HCT116 (cell line): ENCODE measurements at regions of chr12 and their contacts with region 1.

Region 1: GRCh38 chr12:110888256-110888991 is 32.0 kb downstream of the MYL2 start:
- DNase-seq: no peak
- ATAC-seq: no peak
- H3K4me3 ChIP-seq: peak overlapping the region in 1 of 2 experiments; percentile 57; a peak in 3 of 4 replicates
- H3K27ac ChIP-seq: no peak overlapping the region
- H3K4me1 ChIP-seq: peaks cover 0 to 14% of the 10 kb centered on the region in 2 experiments; a peak in 2 of 4 replicates
- H3K27me3 ChIP-seq: no peaks in the 10 kb centered on the region
- CTCF ChIP-seq: no peak
- POLR2A ChIP-seq: no peak
- RAD21 ChIP-seq: no peak

Region 2: DNA sequence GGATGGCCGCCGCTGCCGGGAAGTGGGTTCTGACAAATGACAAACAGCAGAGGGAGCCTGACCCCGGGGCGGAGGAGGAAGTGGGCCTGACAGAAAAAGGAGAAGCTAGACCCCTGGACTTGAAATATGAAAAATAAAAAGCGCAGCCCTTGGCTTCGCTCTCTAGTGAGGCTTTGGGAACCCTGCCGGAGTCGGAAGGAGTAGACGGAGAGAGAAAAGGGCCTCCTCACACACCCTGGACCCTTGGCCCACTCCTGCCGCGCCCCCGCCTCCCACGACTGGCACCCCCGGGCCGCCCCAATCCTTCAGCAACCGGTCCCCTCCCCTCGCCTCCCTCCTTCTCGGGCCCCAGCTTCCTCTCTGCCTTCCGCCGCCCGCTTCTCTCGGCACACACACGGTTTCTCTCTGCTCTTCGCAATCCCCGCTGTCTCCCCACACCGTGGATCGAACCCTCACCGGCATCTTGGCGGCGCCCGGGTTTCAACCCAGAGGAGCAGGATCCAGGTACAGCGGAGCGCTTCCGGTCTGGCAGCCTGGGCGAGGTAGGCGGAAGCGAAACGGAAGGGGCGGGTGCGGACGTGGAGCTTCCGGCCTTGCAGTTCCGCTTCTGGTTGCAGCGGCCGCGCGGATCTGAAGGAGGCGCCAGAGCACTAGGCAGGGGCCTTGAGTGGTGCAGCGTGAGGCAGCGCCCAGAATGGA is 438.5 kb before region 1 on chr12 and contains the start of gene ARPC3:
- CTCF ChIA-PET with region 1: interaction called, 5 read pairs
- POLR2A ChIA-PET with region 1: no interaction called
- RAD21 ChIA-PET with region 1: no interaction called
- intact Hi-C with region 1: loop called (anchors 5 kb)
- DNase-seq: peak; percentile 84
- ATAC-seq: peak; percentile 95
- H3K4me3 ChIP-seq: peak within 1 kb of the TSS; percentile 77 to 95
- H3K27ac ChIP-seq: peak within 1 kb of the TSS; percentile 78
- H3K4me1 ChIP-seq: peaks cover 0 to 13% of the 10 kb centered on the region in 2 experiments; a peak in 2 of 4 replicates
- H3K27me3 ChIP-seq: no peaks in the 10 kb centered on the region
- CTCF ChIP-seq: peak; percentile 81 to 87 (median 85)
- POLR2A ChIP-seq: peak; percentile 50
- RAD21 ChIP-seq: peak; percentile 97
- total RNA-seq, gene ARPC3: 115 TPM

Region 3: GRCh38 chr12:110704748-110705147 is 183.7 kb before region 1 on chr12:
- CTCF ChIA-PET with region 1: interaction called, 8 read pairs
- POLR2A ChIA-PET with region 1: interaction called, 3 read pairs
- RAD21 ChIA-PET with region 1: interaction called, 3 to 4 read pairs
- intact Hi-C with region 1: loop called (anchors 2 kb)
- DNase-seq: peak; percentile 60
- ATAC-seq: peak; percentile 91
- H3K4me3 ChIP-seq: no peak overlapping the region
- H3K27ac ChIP-seq: no peak overlapping the region
- H3K4me1 ChIP-seq: peaks cover 7 to 18% of the 10 kb centered on the region in 2 experiments
- H3K27me3 ChIP-seq: no peaks in the 10 kb centered on the region
- CTCF ChIP-seq: peak; percentile 68 to 84 (median 80)
- POLR2A ChIP-seq: no peak
- RAD21 ChIP-seq: peak; percentile 75

Region 4: DNA sequence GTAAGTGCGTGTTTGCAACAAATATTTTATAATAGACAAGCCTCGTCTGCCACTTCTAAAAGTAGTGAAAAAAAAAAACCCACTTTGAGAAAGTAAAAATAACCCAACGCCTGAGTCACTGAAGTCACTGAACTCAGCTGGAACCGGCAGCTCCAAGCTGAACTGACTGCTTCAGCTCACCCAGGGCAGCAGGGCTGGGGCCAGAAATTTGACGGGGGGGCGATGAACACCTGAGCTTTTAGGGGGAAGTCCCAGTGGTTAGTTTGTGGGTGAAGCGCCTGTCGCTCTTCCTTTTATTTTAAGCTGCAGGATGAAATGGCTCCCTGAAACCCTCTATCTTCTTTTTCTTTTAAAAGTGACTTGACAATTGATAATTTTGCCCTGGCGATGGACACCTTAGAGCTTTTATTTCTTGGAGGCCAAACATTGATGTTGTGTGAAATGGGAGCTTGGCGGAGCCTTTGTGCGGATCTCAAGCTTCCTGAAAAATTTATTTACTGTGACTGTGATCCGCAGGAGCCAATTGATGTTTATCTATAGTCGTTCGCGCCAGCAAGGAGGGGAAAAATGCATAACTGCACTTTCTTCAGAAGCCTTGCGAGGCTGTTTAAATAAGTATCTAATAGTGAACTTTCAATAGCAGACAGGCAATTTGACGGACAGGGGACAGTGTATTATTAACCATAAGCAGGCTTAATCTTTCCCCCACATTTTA is 205.2 kb after region 1 on chr12:
- CTCF ChIA-PET with region 1: no interaction called
- POLR2A ChIA-PET with region 1: no interaction called
- RAD21 ChIA-PET with region 1: no interaction called
- intact Hi-C with region 1: no loop called
- DNase-seq: no peak
- ATAC-seq: no peak
- H3K4me3 ChIP-seq: no peak overlapping the region
- H3K27ac ChIP-seq: no peak overlapping the region
- H3K4me1 ChIP-seq: no peaks in the 10 kb centered on the region
- H3K27me3 ChIP-seq: peaks cover 16% of the 10 kb centered on the region; the same call in 1 of the 2 replicates
- CTCF ChIP-seq: no peak
- POLR2A ChIP-seq: no peak
- RAD21 ChIP-seq: no peak